ENCODE measurements at regions of chr2 and their contacts with region 1.

Region 1: GRCh38 chr2:197378494-197379307 is 56.1 kb downstream of the SF3B1 start:
- DNase-seq: peak in 1 of 2 experiments; percentile 27
- H3K4me3 ChIP-seq: no peak overlapping the region
- H3K27ac ChIP-seq: no peak overlapping the region
- H3K4me1 ChIP-seq: no peaks in the 10 kb centered on the region
- H3K27me3 ChIP-seq: no peaks in the 10 kb centered on the region
- CTCF ChIP-seq: peak; percentile 88

Region 2: GRCh38 chr2:196849895-196850294 is 528.8 kb before region 1 on chr2:
- CTCF ChIA-PET with region 1: no interaction called
- POLR2A ChIA-PET with region 1: no interaction called
- intact Hi-C with region 1: loop called (anchors 2 kb)
- DNase-seq: peak in 1 of 2 experiments; percentile 1
- H3K4me3 ChIP-seq: no peak overlapping the region
- H3K27ac ChIP-seq: no peak overlapping the region
- H3K4me1 ChIP-seq: no peaks in the 10 kb centered on the region
- H3K27me3 ChIP-seq: no peaks in the 10 kb centered on the region
- CTCF ChIP-seq: peak; percentile 45; the same call in 1 of the 2 replicates

Region 3: DNA sequence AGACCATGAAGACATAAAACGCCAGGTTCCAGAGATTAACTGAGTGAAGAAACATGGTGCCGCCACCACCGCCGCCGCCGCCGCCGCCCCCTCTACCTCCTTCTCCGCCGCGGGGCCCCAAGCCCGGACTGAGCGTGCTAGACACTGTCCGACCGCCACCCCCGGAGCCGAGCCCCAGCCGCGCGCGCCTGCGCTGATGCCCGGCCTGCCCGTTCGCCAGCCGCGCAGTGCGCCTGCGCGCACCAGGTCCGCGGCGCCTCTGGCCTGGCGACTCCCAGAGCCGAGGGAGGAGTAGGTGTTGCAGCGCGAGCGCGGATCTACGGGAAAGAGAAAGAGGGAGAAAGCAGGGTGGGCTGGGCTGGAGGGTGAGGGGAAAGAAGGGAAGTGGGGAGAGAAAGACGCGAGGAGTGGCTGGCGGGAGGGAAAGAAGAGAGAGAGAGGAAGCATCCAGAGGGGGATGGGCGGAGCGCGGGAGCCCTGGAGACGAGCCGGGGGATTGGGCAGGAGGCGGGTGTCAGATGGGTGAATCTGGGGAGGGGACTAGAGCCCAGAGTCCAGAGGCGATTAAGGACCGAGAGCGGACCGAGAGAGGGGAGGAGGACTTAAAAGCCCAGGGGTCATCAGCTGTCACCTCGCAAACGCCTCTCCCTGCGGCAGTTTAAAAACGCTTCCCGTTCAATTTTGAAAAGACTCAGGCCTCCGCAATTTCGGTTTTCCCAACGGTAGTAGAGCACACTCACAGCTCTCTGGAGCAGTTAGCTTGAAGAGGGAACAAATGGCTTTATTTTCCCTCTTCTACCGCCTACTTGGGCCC is 451.9 kb before region 1 on chr2 and contains the start of gene PGAP1:
- CTCF ChIA-PET with region 1: no interaction called
- POLR2A ChIA-PET with region 1: no interaction called
- intact Hi-C with region 1: loop called (anchors 5 kb)
- DNase-seq: peak; percentile 62 to 86
- H3K4me3 ChIP-seq: peak within 1 kb of the TSS; percentile 98
- H3K27ac ChIP-seq: peak within 1 kb of the TSS; percentile 60
- H3K4me1 ChIP-seq: peaks cover 18% of the 10 kb centered on the region
- H3K27me3 ChIP-seq: no peaks in the 10 kb centered on the region
- CTCF ChIP-seq: no peak
- total RNA-seq, gene PGAP1: 5.1 and 6.5 TPM in 2 replicates

Region 4: DNA sequence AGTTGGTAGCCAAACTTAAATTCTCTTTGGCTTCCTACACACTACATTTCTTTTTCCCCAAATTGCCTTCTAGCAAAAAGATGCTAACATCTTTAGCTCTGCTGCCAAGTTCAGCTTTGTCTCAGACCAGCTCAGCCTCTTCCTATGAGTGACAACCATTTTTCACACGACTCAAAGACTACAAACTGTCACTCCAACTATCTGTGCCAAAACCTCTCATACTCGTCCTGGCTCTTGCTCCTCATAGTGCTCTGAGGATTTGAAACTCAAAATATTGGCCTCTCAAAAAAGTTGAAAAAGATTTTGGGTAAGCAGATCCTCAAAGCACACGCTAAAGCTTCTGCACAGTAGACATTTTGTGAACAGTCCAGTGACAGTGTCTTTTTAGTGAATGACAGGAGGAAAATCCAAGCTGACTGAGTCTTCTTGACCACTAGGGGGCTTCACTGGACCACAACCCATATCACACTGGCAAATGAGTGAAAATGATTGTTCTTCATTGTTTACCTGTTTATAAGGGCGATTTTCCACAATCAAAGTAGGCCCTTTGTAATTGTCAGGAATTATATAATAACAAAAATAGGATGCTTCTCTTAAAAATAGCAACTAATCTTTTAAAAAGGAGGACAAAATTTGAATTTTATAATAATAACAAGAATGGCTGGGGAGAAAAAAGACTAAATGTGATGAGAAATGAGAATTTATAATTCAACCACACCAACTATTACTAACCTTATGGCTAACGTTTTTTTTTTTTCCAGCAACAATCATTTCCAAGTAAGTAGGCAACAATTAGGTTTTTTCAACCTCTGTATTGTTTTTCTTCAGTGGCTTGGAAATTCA is 366.7 kb before region 1 on chr2:
- CTCF ChIA-PET with region 1: no interaction called
- POLR2A ChIA-PET with region 1: no interaction called
- intact Hi-C with region 1: loop called (anchors 1 kb)
- DNase-seq: peak in 1 of 2 experiments; percentile 33
- H3K4me3 ChIP-seq: no peak overlapping the region
- H3K27ac ChIP-seq: no peak overlapping the region
- H3K4me1 ChIP-seq: peaks cover 22% of the 10 kb centered on the region
- H3K27me3 ChIP-seq: no peaks in the 10 kb centered on the region
- CTCF ChIP-seq: peak; percentile 86

Region 5: DNA sequence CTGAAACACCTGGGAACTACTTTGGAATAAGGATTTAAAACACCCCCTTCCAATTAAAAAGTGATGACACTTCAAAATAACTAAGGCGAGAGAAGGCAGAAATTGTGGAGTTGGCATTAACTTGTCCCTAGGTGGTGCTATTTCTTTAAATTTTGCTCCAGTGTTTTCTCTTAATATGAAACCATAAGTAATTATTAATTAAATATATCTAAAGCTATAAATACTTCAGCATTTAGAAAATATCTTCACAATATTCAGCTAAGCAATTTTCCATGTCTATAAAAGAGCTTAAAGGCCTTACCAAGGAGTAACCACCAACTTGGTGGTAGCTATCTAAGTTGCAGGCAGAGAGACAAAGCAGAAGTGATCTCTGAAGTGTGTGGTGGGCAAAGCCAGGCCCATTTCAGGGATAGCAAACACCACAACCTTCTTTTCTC is 265.4 kb before region 1 on chr2:
- CTCF ChIA-PET with region 1: interaction called, 5 read pairs
- POLR2A ChIA-PET with region 1: no interaction called
- intact Hi-C with region 1: loop called (anchors 1 kb)
- DNase-seq: no peak
- H3K4me3 ChIP-seq: no peak overlapping the region
- H3K27ac ChIP-seq: no peak overlapping the region
- H3K4me1 ChIP-seq: no peaks in the 10 kb centered on the region; the same call in 1 of the 2 replicates
- H3K27me3 ChIP-seq: no peaks in the 10 kb centered on the region
- CTCF ChIP-seq: peak; percentile 73

Region 6: DNA sequence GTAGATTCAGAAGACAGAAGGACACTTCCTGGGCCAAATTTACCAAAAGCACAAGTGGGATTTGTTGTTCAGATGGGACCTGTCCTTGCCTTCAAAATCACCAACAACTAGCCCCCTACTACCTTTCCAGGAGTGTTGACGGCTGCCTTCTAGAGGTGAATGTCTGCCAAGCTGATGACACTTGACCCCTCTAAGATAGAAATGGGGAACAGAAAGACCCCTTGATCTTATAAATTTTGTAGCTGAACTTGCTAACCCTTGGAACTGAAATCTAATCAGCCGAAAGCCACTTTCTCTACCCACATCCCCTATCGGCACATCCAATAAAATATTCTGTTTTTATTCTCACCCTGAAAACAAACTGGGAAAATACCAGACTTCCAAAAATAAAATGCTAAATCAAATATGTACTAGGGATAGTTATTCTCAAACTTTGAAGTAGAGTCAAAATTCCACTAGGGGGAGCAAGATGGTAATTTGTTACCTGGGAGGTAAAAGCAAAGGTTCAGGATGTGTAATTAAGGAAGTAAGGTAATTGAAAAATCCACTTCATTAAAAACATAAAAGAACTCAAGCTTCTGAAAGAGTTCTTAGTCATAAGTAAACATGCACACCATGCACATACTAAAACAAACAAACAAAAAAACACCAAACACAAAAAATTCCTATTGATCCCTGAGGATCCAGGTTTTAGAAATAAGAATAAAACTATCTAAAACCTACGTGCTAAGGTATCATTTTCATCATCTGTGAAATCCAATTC is 187.3 kb before region 1 on chr2:
- CTCF ChIA-PET with region 1: no interaction called
- POLR2A ChIA-PET with region 1: no interaction called
- intact Hi-C with region 1: loop called (anchors 1 kb)
- DNase-seq: peak in 1 of 2 experiments; percentile 44
- H3K4me3 ChIP-seq: no peak overlapping the region
- H3K27ac ChIP-seq: no peak overlapping the region
- H3K4me1 ChIP-seq: no peaks in the 10 kb centered on the region
- H3K27me3 ChIP-seq: no peaks in the 10 kb centered on the region
- CTCF ChIP-seq: peak; percentile 77

Region 7: DNA sequence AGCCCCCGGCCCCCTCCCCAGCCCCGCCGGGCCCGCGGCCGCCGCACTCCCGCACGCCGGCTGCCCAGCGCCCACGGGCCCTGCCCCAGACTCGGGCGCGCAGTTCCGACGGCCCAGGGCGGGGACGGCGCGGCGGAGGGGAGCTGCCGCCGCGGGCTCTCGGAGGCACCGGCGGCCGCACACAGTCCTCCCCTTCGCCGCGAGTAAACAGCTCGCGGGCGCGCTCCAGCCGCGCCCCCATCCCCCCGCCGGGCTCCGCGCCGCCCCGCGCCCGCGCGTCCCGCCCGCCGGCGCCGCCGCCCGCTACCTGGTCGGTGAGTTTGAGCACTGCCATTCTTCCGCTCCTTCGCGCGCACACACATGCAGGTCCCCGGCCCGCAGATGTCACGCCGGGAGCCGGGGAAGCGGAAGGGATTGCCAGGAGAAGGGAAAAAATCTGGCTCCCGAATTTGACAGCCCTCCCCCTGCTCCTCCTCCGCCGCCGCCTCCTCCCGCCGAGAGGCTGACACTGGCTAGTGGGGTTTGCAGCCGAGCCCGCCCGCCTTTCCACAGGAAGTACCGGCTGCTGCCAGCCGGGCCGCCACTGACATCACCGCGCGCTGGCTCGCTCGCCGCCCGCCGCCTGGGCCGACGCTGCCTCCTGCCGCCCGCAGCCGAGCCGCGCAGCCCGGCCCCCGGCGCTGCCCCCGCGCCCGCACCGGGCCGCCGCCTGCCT is 68.3 kb before region 1 on chr2 and contains the start of gene ANKRD44:
- CTCF ChIA-PET with region 1: no interaction called
- POLR2A ChIA-PET with region 1: interaction called, 3 read pairs
- intact Hi-C with region 1: loop called (anchors 10 kb)
- DNase-seq: peak; percentile 40 to 73
- H3K4me3 ChIP-seq: peak within 1 kb of the TSS; percentile 59; the same call in 1 of the 2 replicates
- H3K27ac ChIP-seq: no peak within 1 kb of the TSS
- H3K4me1 ChIP-seq: peaks cover 11% of the 10 kb centered on the region; the same call in 1 of the 2 replicates
- H3K27me3 ChIP-seq: no peaks in the 10 kb centered on the region
- CTCF ChIP-seq: no peak
- total RNA-seq, gene ANKRD44: 1.7 and 3.4 TPM in 2 replicates

Region 8: DNA sequence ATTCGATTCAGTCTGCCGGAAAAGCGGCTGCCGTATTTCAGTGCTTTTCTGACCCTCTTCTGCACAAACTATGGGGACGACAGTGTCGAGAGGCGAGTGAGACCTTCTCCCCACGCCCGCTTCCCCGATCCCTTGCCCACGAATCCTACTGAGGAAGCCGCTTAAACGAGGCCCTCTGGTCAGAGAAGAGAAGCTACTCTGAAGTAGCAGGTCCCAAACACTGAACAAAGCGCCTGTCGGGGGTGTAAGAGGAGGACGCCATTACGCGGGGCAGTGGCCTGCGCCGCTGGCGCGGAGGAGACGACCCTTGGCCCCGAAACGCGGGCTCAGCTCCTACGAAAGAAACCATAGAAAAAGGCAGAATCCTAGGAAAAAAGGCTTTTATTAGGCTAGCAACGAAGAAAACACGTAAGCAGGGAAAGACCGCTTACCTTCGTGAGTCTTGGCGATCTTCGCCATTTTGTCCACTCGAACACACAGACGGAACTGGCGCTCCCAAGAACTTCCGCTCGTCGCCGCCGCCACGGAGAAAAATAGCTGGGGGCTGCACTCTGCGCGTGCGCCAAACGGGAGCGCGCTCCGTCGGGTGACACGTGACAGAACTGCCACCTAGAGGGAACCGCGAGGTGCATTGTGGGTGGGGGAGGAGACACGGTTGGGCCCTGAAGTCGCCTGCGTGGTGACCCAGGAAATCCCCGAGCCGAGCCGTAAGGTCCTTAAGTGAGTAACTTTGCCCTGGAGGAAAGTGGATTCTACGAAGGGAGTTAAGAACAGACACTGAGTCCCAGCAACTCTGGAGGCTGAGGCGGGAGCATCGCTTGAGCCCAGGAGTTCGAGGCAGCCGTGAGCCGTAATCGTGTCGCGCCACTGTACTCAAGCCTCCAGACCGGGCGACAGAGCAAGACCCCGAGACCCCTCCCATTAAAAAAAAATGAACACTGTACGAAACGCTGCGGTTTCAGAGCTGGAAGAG is 56.1 kb after region 1 on chr2 and contains the start of gene SF3B1:
- CTCF ChIA-PET with region 1: no interaction called
- POLR2A ChIA-PET with region 1: no interaction called
- intact Hi-C with region 1: no loop called
- DNase-seq: peak; percentile 93 to 97
- H3K4me3 ChIP-seq: peak within 1 kb of the TSS; percentile 77
- H3K27ac ChIP-seq: peak within 1 kb of the TSS; percentile 80
- H3K4me1 ChIP-seq: peaks cover 24% of the 10 kb centered on the region
- H3K27me3 ChIP-seq: no peaks in the 10 kb centered on the region
- CTCF ChIP-seq: no peak
- total RNA-seq, gene SF3B1: 127 and 156 TPM in 2 replicates

Measured in PC-9 (cell line).